ENCODE measurements at regions of chr11 and their contacts with region 1.

Region 1: DNA sequence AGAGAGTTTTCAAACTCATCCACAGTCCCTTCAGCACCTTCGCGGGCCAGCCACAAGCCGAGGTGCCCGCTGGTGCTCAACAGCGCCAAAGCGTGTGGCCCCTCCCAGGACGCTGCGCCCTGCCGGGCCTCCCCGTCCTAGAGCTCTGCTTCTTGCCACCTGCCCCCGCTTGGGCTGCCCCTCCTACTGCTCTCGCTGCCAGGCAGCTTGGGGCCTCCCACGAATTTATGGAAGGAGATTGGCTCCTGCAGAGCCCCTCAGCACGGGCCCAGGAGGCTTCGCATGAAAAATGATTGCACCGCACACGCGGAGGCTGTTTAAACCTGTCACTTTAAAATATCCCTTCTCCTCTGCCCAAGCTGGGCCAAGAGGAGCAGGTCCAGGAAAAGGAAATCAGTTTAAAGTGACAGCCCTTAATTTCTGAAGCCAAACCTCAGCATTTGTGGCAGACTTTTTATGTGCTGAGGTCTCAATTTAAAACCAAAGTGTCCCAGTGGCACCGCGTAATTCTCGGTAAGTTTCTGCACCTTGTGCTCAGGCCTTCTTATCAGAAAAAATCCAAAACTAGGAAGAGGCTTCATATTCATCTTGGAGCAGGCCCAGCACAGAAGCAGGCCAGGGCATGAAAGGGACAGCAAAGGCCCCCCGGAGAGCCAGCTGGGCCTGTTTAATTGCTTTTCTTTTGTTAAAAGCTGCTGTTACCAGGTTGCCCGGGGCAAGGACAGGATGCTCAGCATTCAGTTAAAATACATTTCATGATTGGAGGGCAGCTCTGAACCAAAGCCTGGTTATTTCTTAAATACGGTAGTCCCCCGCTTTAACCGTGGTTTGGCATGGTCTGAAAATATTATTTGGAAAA is 303.6 kb downstream of the OPCML start:
- DNase-seq: peak; percentile 71 to 81
- H3K4me3 ChIP-seq: peak overlapping the region in 3 of 4 experiments; percentile 8 to 49 (median 23); a peak in 4 of 8 replicates
- H3K27ac ChIP-seq: no peak overlapping the region
- H3K4me1 ChIP-seq: peaks cover 5 to 18% (median 11%) of the 10 kb centered on the region in 4 experiments; a peak in 6 of 7 replicates
- H3K27me3 ChIP-seq: peaks cover 0 to 13% (median 6%) of the 10 kb centered on the region in 4 experiments; a peak in 5 of 7 replicates
- CTCF ChIP-seq: no peak
- EP300 ChIP-seq: peak in 1 of 2 experiments; percentile 68; a peak in 1 of 3 replicates
- POLR2A ChIP-seq: no peak
- RAD21 ChIP-seq: 0 out of 4 replicates have a peak, but pooled peaks of 1 of the 2 experiments have one; percentile 1

Region 2: DNA sequence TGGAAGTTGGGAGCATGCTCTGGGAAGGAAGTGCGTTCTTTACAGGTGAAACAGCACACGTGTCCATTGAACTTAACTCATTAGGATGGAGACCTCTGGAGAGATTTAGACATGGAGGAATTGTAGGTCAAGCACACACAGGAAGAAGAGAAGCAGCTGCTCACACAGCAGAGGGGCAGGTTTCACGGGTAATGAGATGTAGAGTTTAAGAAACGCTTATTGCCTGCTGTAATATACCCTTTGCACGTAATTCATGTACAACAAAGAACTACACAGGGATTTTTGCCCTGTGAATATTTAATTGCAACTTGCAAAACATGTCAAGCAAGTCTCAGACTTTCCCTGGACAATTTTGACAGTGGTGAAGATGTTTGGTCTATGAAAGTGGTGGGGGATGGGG is 204.4 kb before region 1 on chr11:
- CTCF ChIA-PET with region 1: no interaction called
- POLR2A ChIA-PET with region 1: no interaction called
- DNase-seq: no peak
- H3K4me3 ChIP-seq: no peak overlapping the region
- H3K27ac ChIP-seq: no peak overlapping the region
- H3K4me1 ChIP-seq: peaks cover 0 to 2% (median 0%) of the 10 kb centered on the region in 4 experiments; a peak in 2 of 7 replicates
- H3K27me3 ChIP-seq: peaks cover 0 to 2% (median 0%) of the 10 kb centered on the region in 4 experiments; a peak in 2 of 7 replicates
- CTCF ChIP-seq: no peak
- EP300 ChIP-seq: no peak
- POLR2A ChIP-seq: no peak
- RAD21 ChIP-seq: no peak

Region 3: GRCh38 chr11:133243832-133244231 is 15.1 kb after region 1 on chr11:
- CTCF ChIA-PET with region 1: interaction called, 17 read pairs
- POLR2A ChIA-PET with region 1: interaction called, 3 read pairs
- DNase-seq: peak in 1 of 2 experiments; percentile 52
- H3K4me3 ChIP-seq: no peak overlapping the region
- H3K27ac ChIP-seq: no peak overlapping the region
- H3K4me1 ChIP-seq: peaks cover 2 to 11% (median 5%) of the 10 kb centered on the region in 4 experiments; a peak in 5 of 7 replicates
- H3K27me3 ChIP-seq: no peaks in the 10 kb centered on the region
- CTCF ChIP-seq: peak; percentile 51 to 75 (median 71)
- EP300 ChIP-seq: no peak
- POLR2A ChIP-seq: no peak
- RAD21 ChIP-seq: peak; percentile 34 to 56

Region 4: DNA sequence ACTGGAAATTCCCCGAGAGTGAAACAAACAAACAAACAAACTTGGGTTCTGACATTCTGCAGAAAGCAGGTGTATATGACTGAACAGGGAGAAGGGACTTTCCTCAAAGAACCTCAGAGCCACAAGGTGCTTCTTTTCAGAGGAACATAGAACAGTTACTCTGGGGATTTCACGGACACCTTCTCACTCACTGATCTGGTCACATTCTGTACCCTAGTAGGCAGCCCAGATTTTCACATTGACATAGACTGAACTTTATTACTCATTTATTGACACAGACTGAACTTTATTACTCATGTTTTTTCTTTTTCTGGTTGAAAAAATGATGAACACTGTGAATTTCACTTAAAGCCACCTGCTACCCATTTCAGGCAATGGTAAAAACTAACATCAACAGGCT is 40.6 kb after region 1 on chr11:
- CTCF ChIA-PET with region 1: no interaction called
- POLR2A ChIA-PET with region 1: no interaction called
- DNase-seq: no peak
- H3K4me3 ChIP-seq: no peak overlapping the region
- H3K27ac ChIP-seq: no peak overlapping the region
- H3K4me1 ChIP-seq: no peaks in the 10 kb centered on the region
- H3K27me3 ChIP-seq: peaks cover 0 to 1% (median 0%) of the 10 kb centered on the region in 4 experiments; a peak in 1 of 7 replicates
- CTCF ChIP-seq: no peak
- EP300 ChIP-seq: no peak
- POLR2A ChIP-seq: no peak
- RAD21 ChIP-seq: no peak

Measured in H1 (cell line).